ENCODE measurements at regions of chr4 and their contacts with region 1.

Region 1: DNA sequence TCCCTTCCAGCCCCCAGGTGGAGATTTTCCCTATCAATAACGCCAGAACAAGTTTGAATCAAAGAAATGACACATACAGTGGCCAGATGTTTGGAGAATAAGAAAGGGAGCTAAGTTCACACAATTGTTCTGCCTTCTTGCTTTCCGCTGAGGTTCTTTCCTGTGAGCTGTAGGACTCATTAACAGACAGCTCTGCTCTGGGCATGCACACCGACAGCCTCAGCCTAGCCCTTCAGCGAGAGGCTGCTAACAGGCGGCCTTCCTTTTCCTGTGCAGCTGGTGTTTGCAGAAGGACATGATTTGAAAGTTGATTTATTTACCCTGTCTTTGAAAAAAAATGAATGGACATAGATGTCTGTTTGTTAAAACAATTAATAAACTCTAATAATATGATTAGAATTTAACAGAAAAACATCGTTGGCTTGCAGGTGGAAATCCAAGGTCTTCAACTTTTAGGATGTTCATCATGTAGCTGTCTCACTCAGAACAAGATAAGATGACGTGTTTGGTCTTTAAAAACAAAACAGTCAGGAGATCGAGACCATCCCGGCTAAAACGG is 183.3 kb downstream of the KDR start:
- DNase-seq: peak; percentile 18 to 78 (median 34)
- ATAC-seq: peak; percentile 79
- H3K4me3 ChIP-seq: peak overlapping the region in 1 of 2 experiments; percentile 12
- H3K4me3 Mint-ChIP-seq: peak overlapping the region; percentile 71
- H3K27ac ChIP-seq: peak overlapping the region; percentile 59 to 72
- H3K27ac Mint-ChIP-seq: peak overlapping the region; percentile 98
- H3K4me1 ChIP-seq: peaks cover 40% of the 10 kb centered on the region
- H3K4me1 Mint-ChIP-seq: peaks cover 56% of the 10 kb centered on the region
- H3K27me3 ChIP-seq: no peaks in the 10 kb centered on the region
- H3K27me3 Mint-ChIP-seq: no peaks in the 10 kb centered on the region
- CTCF ChIP-seq: no peak

Region 2: DNA sequence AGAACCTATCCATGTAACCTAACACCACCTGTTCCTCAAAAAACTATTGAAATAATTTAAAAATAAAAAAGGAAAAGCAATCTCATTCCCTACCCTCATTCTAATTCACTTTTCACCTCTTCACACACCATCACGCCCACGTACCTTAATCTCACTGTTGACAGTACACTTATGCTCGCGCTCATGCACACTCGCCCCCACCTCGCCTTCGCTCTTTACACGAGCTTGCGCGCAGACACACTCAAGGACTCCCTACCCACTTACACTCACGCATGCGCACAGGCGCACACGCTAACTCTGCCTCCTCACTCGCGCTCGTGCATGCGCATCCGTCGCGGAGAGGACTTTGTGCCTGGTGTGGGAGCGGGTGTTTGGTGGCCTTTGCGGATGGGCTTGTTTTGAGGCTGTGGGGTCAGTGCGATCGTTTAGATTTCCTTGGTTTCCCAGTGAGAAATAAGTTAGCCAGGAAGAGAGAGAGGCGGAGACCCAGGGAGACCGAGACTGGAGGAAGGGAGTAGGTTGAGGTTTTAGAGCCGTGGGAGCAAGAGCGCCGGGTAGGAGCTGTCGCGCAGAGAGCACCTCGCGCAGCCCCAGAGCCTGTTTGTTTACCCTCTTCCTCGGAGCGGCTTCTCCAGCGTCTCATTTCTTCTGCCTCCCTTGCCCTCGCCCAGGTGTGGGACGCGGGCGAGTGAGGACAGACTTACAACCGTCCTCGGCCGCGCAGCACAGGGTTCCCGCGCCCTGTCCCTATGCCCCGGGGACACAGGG is 850.3 kb before region 1 on chr4:
- CTCF ChIA-PET with region 1: no interaction called
- POLR2A ChIA-PET with region 1: no interaction called
- intact Hi-C with region 1: loop called in 1 of 2 experiments (anchors 10 kb)
- DNase-seq: peak; percentile 57 to 92 (median 81)
- ATAC-seq: peak; percentile 87
- H3K4me3 ChIP-seq: peak overlapping the region; percentile 64 to 78
- H3K4me3 Mint-ChIP-seq: peak overlapping the region; percentile 86
- H3K27ac ChIP-seq: no peak overlapping the region
- H3K27ac Mint-ChIP-seq: peak overlapping the region; percentile 7
- H3K4me1 ChIP-seq: peaks cover 31% of the 10 kb centered on the region
- H3K4me1 Mint-ChIP-seq: peaks cover 23% of the 10 kb centered on the region
- H3K27me3 ChIP-seq: peaks cover 26 to 40% of the 10 kb centered on the region in 2 experiments
- H3K27me3 Mint-ChIP-seq: peaks cover 42% of the 10 kb centered on the region
- CTCF ChIP-seq: no peak

Region 3: GRCh38 chr4:54823616-54824015 is 118.5 kb before region 1 on chr4:
- CTCF ChIA-PET with region 1: no interaction called
- POLR2A ChIA-PET with region 1: no interaction called
- intact Hi-C with region 1: no loop called
- DNase-seq: no peak
- ATAC-seq: no peak
- H3K4me3 ChIP-seq: no peak overlapping the region
- H3K4me3 Mint-ChIP-seq: no peak overlapping the region
- H3K27ac ChIP-seq: no peak overlapping the region
- H3K27ac Mint-ChIP-seq: no peak overlapping the region
- H3K4me1 ChIP-seq: no peaks in the 10 kb centered on the region
- H3K4me1 Mint-ChIP-seq: peaks cover 5% of the 10 kb centered on the region
- H3K27me3 ChIP-seq: no peaks in the 10 kb centered on the region
- H3K27me3 Mint-ChIP-seq: peaks cover 4% of the 10 kb centered on the region
- CTCF ChIP-seq: no peak

Region 4: GRCh38 chr4:55903577-55903976 is 961.5 kb after region 1 on chr4:
- CTCF ChIA-PET with region 1: no interaction called
- POLR2A ChIA-PET with region 1: no interaction called
- intact Hi-C with region 1: no loop called
- DNase-seq: no peak
- ATAC-seq: no peak
- H3K4me3 ChIP-seq: no peak overlapping the region
- H3K4me3 Mint-ChIP-seq: no peak overlapping the region
- H3K27ac ChIP-seq: no peak overlapping the region
- H3K27ac Mint-ChIP-seq: no peak overlapping the region
- H3K4me1 ChIP-seq: peaks cover 9% of the 10 kb centered on the region
- H3K4me1 Mint-ChIP-seq: peaks cover 14% of the 10 kb centered on the region
- H3K27me3 ChIP-seq: no peaks in the 10 kb centered on the region
- H3K27me3 Mint-ChIP-seq: no peaks in the 10 kb centered on the region
- CTCF ChIP-seq: no peak